Pancreas (tissue), 10 donors: ENCODE measurements at regions of chr6 and their contacts with region 1.

Region 1: DNA sequence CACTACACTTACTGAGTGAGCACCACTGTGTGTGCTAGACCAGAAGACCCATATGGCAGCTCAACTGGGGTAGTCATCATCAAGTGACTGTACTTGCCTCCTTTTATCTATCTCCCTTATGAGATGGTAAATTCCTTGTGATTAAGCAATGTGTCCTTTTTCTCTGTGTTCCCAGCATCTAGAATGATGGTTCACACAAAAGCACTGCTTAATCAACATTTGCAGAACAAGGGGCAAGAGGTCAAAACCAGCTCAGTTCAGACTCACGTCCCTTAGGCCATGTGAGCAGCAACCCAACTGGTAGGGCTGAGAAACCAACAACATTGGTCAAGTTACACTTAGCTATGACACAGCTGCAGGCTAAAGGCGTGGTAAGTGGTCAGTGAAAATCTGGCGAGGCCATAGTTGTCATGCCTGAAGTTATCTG is 10.0 kb downstream of the TRAM2 start:
- DNase-seq: no peak
- ATAC-seq: peak in 2 of 4 donors; percentile 31 to 39
- H3K4me3 ChIP-seq: no peak overlapping the region
- H3K27ac ChIP-seq: no peak overlapping the region
- H3K4me1 ChIP-seq: peaks cover 0 to 3% (median 0%) of the 10 kb centered on the region in 3 donors
- H3K27me3 ChIP-seq: no peaks in the 10 kb centered on the region
- CTCF ChIP-seq: no peak

Region 2: GRCh38 chr6:52517502-52518278 is 49.2 kb before region 1 on chr6:
- intact Hi-C with region 1: loop called in 1 of 3 experiments (anchors 10 kb)
- DNase-seq: peak in 5 of 6 donors; percentile 66 to 84 (median 74)
- ATAC-seq: peak; percentile 86 to 95 (median 93)
- H3K4me3 ChIP-seq: no peak overlapping the region
- H3K27ac ChIP-seq: peak overlapping the region in 2 of 4 donors; percentile 58 to 81
- H3K4me1 ChIP-seq: peaks cover 0 to 12% (median 0%) of the 10 kb centered on the region in 3 donors
- H3K27me3 ChIP-seq: no peaks in the 10 kb centered on the region
- CTCF ChIP-seq: no peak

Region 3: DNA sequence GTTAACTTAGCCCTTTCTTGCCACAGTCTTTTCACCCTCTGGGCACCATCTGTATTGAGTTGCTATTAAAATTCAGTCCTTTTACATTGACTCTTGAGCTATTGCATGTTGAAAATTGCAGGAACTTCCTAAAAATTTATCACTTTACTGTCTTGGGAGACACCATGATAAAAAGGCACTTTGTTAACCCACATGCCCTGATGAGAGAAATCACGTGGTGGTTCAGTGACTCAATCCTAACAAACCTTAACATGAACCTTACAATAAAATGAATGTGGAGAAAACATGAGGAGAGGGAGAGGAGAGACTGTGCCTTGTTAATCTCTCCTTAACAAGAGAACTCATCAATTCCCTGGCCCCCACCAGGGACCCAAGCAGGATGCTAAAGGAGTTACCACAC is 397.5 kb after region 1 on chr6:
- intact Hi-C with region 1: no loop called
- DNase-seq: no peak
- ATAC-seq: no peak
- H3K4me3 ChIP-seq: no peak overlapping the region
- H3K27ac ChIP-seq: no peak overlapping the region
- H3K4me1 ChIP-seq: no peaks in the 10 kb centered on the region
- H3K27me3 ChIP-seq: no peaks in the 10 kb centered on the region
- CTCF ChIP-seq: no peak